ENCODE measurements at regions of chr4 and their contacts with region 1.

Region 1: DNA sequence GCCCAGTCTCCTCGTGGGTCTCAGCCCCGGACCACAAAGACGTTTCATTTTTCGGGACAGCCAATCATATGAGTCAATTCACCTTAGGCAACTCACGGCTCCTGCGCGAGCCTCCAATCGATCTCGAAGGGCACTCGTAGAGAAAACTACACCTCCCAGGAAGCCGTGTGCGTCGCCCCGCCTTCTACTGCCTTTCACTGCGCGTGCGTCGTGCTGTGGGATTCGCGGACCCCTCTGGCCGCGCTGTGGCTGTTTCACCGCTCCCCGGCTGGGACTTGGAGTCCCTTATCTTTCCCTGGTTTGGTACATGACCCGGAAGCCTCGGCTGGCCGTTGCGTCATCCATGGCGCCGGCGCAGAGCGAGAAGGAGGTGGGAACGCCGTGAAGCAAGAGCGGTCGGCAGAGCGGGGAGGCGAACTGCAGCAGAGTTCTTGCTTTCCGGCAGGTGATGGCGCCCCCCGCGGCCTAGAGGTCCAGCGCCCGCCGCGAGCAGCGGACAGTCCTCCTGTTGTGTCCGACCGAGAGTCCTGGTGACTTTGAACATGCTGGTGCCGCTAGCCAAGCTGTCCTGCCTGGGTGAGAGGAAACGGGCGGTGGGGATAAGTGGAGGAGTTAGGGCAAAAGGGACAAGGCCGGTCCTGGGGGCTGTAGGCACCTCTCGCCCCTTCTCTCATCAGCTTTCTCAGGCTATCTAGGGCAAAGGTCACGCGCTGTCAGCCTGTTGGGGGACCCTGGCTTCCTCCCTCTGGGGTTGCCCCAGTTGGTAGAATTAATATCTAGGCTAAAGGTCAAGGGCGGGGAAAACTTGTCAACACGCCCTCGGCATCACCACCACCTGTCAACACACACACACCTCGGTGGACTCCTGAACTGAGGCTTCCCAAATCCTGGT is at the start of gene ETFDH:
- DNase-seq: peak; percentile 98
- H3K4me3 Mint-ChIP-seq: peak within 1 kb of the TSS; percentile 98
- H3K27ac Mint-ChIP-seq: peak within 1 kb of the TSS; percentile 95
- H3K4me1 Mint-ChIP-seq: peaks cover 25% of the 10 kb centered on the region
- H3K27me3 Mint-ChIP-seq: no peaks in the 10 kb centered on the region
- total RNA-seq, gene ETFDH: 21.6 and 23.8 TPM in 2 replicates

Region 2: GRCh38 chr4:158209825-158210807 is 462.0 kb before region 1 on chr4 and contains the start of gene TMEM144:
- intact Hi-C with region 1: no loop called
- DNase-seq: no peak
- H3K4me3 Mint-ChIP-seq: peak within 1 kb of the TSS; percentile 81
- H3K27ac Mint-ChIP-seq: no peak within 1 kb of the TSS
- H3K4me1 Mint-ChIP-seq: peaks cover 13% of the 10 kb centered on the region
- H3K27me3 Mint-ChIP-seq: peaks cover 31% of the 10 kb centered on the region
- total RNA-seq, gene TMEM144: 0.16 and 0.23 TPM in 2 replicates

Region 3: DNA sequence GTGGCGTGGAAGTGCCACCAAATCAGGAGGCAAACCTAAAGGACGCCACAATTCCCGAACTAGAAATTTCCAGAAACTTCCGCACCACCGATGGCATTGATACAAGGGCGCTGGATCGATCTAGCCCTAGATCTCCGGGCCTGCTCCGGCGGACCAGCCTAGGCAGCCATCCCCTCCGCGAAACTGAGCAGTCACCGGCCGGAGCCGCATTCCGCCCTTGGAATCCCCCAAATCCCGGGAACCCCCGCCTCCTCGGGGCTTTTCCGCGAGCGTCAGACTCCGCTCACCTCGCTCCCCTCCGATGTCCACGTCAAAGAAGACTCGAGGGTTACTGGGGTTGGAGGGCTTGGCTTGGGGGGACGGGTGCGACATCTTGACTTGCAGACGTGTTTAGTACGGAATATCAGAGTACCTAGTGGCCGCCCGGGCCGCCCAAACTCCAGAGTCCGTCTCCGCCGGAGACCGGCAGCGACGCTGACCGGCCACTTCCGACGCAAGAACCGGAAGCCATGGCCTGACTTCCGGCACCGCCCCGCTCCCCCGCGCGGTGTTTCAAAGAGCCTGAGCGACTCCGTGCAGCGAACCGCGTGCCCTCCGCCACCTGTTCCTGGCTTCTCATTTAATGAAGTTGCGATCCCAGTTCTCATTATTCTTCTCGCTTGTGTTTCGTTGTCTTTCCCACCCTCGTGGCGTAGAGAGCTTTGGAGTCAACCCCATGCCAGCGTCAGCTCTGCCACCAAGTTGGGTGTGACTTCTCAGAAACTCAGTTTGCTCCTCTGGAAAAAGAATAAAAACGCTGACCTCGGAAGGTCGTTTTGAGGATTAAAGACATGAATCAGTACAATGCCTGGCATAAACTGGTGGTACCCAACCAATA is 51.0 kb after region 1 on chr4 and contains the start of gene PPID:
- intact Hi-C with region 1: loop called (anchors 1 kb)
- DNase-seq: peak; percentile 77
- H3K4me3 Mint-ChIP-seq: peak within 1 kb of the TSS; percentile 95
- H3K27ac Mint-ChIP-seq: peak within 1 kb of the TSS; percentile 98
- H3K4me1 Mint-ChIP-seq: peaks cover 50% of the 10 kb centered on the region
- H3K27me3 Mint-ChIP-seq: peaks cover 2% of the 10 kb centered on the region
- total RNA-seq, gene PPID: 56.8 and 58.5 TPM in 2 replicates

Measured in activated T-helper 2 cell treated with anti-CD3 and anti-CD28 coated beads, Interferon-gamma antibody, Interleukin-2, Interleukin-4, amounts not matched to agents 10 μg/mL and 5 μg/mL and 100 μg/mL, durations not matched to agents 14 hours and 24 hours and 36 hours (primary cell).